Mammary epithelial cell (primary cell): ENCODE measurements at regions of chr9 and their contacts with region 1.

Region 1: DNA sequence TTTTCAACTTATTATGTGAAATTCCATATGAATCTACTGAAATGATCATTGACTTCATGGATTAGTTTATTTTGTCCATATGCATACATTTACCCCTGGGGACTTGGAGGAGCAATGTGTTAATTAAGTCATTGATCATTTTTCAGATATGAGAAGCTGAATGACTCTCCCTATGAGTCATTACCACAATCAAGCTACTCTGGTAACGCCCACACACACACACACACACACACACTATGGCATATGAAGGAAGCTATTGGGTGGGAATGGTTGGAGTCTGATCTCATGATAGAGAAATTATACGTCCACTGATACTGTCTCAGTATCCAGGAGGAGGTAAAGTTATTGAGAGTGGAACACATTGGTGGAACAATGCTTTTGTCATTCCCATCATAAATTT is 528.9 kb downstream of the AGTPBP1 start:
- DNase-seq: peak; percentile 96
- H3K4me3 ChIP-seq: peak overlapping the region in 2 of 3 experiments; percentile 4 to 19
- H3K27ac ChIP-seq: peak overlapping the region; percentile 97
- H3K4me1 ChIP-seq: peaks cover 33% of the 10 kb centered on the region
- H3K27me3 ChIP-seq: no peaks in the 10 kb centered on the region
- CTCF ChIP-seq: no peak

Region 2: GRCh38 chr9:85114799-85115198 is 98.1 kb before region 1 on chr9:
- CTCF ChIA-PET with region 1: no interaction called
- dilution Hi-C with region 1: no loop called
- in situ Hi-C with region 1: loop called in 1 of 2 experiments (anchors 5 kb)
- intact Hi-C with region 1: loop called (anchors 2 kb)
- DNase-seq: peak; percentile 80
- H3K4me3 ChIP-seq: no peak overlapping the region
- H3K27ac ChIP-seq: peak overlapping the region; percentile 43
- H3K4me1 ChIP-seq: peaks cover 30% of the 10 kb centered on the region
- H3K27me3 ChIP-seq: no peaks in the 10 kb centered on the region
- CTCF ChIP-seq: no peak

Region 3: DNA sequence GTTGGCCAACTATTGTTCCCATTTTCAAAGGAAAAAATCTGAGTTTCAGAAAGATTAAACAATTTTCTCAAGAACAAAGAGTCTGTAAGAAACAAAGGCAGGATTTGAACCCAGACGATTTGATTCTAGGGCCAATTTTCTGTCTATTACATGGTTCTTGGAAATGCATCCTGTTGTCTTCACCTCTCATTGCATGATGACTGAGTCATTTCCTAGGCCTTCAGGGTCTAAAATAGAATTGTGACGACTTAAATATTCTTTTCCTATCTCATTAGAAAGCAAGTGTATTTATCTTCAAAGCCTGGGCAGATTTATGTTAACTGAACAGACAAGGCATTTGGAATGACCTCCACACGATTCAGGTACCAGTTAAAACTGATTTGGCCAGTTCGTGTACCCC is 30.5 kb before region 1 on chr9:
- CTCF ChIA-PET with region 1: no interaction called
- dilution Hi-C with region 1: no loop called
- in situ Hi-C with region 1: no loop called
- intact Hi-C with region 1: loop called (anchors 2 kb)
- DNase-seq: peak; percentile 26
- H3K4me3 ChIP-seq: no peak overlapping the region
- H3K27ac ChIP-seq: no peak overlapping the region
- H3K4me1 ChIP-seq: peaks cover 9% of the 10 kb centered on the region
- H3K27me3 ChIP-seq: no peaks in the 10 kb centered on the region
- CTCF ChIP-seq: no peak

Region 4: DNA sequence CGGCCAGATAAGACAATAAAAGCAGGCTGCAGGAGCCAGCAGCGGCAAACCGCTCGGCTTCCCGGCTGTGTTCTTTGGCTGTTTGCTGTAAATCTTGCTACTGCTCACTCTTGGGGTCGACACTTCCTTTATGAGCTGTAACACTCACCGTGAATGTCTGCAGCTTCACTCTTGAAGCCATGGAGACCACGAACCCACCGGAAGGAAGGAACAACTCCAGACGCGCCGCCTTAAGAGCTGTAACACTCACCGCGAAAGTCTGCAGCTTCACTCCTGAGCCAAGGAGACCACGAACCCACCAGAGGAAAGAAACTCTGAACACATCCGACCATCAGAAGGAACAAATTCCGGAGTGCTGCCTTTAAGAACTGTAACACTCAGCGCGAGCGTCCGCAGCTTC is 77.1 kb after region 1 on chr9:
- CTCF ChIA-PET with region 1: no interaction called
- dilution Hi-C with region 1: no loop called
- in situ Hi-C with region 1: no loop called
- intact Hi-C with region 1: no loop called
- DNase-seq: no peak
- H3K4me3 ChIP-seq: no peak overlapping the region
- H3K27ac ChIP-seq: no peak overlapping the region
- H3K4me1 ChIP-seq: no peaks in the 10 kb centered on the region
- H3K27me3 ChIP-seq: no peaks in the 10 kb centered on the region
- CTCF ChIP-seq: no peak